HEK293 (cell line): ENCODE measurements at regions of chr20 and their contacts with region 1.

Region 1: DNA sequence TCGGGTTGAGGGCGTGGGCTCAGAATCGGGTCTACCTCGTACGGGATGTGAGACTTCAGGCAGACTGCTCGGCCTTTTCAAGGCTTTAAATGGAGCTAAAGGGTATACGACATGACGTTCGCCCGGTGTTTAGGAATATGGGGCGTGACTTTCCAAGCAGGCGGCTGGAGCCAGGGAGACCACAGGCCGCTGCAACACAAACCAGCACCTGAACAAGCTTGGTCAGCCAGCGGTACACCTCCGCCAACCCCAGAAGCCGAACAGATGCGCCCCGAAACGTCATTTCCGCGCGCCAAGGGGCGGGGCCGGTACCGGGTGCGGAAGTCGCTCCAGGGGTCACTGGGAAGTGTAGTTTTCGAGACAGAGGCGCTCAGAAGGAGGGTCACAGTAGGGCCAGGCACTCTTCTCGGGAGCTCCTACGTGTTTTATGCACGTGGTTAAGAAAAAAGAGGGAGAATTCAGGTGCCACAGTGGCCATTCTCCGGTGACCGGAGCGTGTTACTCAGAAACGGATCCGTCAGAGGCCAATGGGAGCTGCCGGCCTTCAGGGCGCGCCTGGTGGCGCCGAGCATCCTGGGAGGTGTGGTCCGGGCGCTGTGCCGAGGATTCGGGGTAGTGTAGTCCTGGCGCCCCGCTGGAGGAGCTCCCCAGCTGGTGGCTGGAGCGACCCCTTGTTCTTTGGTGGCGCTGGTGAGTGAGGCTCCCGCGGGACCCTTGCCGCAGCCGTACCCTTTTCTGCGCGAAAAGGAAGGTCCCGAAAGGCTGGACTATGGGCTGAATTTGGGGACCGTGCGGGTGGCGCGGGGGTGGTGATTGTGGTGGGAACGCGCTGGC is at the start of gene ZNF133:
- H3K4me3 ChIP-seq: peak within 1 kb of the TSS; percentile 96
- H3K27ac ChIP-seq: peak within 1 kb of the TSS; percentile 75
- H3K4me1 ChIP-seq: no peaks in the 10 kb centered on the region
- CTCF ChIP-seq: peak; percentile 96

Region 2: DNA sequence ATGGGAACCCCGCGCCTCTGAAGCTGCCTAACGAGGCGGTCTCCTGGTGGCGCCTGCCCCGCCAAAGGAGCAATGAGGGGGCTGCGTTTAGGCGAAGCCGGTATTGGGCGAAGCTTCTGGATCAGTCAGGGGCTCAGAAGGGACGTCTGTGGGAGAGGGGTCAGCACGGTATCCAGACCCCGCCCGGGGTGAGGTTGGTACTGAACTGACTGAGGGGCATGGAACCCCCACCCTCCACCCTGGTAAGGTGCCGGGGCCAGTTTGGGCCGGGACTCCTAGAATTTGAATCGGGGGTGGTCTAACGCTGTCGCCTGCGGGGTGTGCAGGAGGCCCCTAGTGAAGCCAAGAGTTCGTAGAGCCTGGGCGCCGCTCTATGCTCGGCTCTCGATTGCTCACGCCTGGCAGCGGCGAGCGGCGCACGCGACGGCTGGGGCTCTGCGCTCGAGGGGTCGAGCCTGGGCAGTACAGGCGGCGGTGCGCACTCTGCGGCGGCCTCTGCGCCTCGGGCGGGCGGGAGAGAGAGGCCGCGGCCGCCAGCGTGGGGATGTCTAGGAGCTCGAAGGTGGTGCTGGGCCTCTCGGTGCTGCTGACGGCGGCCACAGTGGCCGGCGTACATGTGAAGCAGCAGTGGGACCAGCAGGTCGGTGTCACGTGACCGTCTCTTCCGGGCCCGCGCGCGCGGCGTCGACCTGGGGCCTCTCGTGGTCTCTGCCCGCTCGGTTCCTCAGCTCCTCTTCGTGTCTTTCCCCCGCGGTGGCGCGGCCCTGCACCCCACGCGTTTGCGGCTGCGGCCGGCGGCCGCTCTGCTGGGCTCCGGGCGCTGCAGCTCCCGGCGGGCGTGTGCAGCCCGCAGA is 150.5 kb before region 1 on chr20 and contains the starts of genes KAT14 and PET117:
- CTCF ChIA-PET with region 1: no interaction called
- POLR2A ChIA-PET with region 1: interaction called, 10 read pairs
- H3K4me3 ChIP-seq: peak within 1 kb of the TSS; percentile 86
- H3K27ac ChIP-seq: peak within 1 kb of the TSS; percentile 88
- H3K4me1 ChIP-seq: peaks cover 3% of the 10 kb centered on the region; the same call in 1 of the 2 replicates
- CTCF ChIP-seq: no peak

Region 3: DNA sequence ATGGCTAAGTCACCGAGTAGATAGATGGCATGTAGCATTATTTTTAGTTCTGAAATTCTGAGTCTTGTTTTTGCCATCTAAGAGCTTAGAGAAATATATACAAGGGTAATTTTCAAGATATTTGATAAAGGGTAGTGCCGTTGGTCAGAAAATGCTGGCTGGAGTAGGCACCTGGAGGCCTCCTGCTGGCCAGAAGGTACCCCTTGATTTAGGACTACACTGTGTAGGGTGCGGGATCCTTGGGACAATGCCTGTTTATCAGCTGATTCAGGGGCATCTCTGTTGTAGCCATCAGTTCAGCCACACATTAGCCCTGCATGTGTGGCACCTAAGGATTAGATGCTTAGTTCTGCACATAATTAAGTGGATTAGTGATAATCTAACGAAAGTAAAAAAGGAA is 137.9 kb before region 1 on chr20:
- CTCF ChIA-PET with region 1: no interaction called
- POLR2A ChIA-PET with region 1: no interaction called
- H3K4me3 ChIP-seq: no peak overlapping the region
- H3K27ac ChIP-seq: no peak overlapping the region
- H3K4me1 ChIP-seq: no peaks in the 10 kb centered on the region
- CTCF ChIP-seq: no peak

Region 4: DNA sequence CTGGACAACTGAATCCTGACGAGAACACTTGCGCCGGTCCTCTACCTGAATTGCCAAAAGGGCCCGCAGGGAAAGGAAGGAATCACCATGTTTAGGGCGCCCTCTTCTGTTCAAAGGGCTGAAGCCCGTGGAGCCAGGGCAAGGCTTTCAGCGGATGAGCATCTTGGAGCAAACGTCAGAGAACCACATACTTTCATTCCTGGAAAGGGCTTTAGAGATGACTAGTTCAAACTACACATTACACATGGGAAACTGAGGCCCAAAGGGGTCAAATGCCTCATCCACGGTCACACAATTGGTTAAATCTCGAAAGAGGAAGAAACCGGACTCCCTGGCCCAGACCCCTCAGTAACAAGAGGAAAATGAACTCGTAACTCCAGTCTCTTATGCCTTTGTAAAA is 11.3 kb before region 1 on chr20:
- CTCF ChIA-PET with region 1: interaction called, 10 read pairs
- POLR2A ChIA-PET with region 1: no interaction called
- H3K4me3 ChIP-seq: no peak overlapping the region
- H3K27ac ChIP-seq: no peak overlapping the region
- H3K4me1 ChIP-seq: no peaks in the 10 kb centered on the region
- CTCF ChIP-seq: peak; percentile 86